ENCODE measurements at regions of chr16 and their contacts with region 1.

Region 1: GRCh38 chr16:67521095-67521804 is 7.4 kb upstream of the RIPOR1 start:
- DNase-seq: peak; percentile 95 to 97
- ATAC-seq: peak; percentile 91 to 97 (median 94)
- H3K4me3 ChIP-seq: peak overlapping the region in 9 of 10 donors; percentile 14 to 55 (median 52)
- H3K27ac ChIP-seq: peak overlapping the region in 9 of 10 donors; percentile 74 to 95 (median 87)
- H3K4me1 ChIP-seq: peaks cover 0 to 22% (median 12%) of the 10 kb centered on the region in 9 donors
- H3K27me3 ChIP-seq: no peaks in the 10 kb centered on the region
- CTCF ChIP-seq: peak; percentile 71 to 90 (median 77)

Region 2: DNA sequence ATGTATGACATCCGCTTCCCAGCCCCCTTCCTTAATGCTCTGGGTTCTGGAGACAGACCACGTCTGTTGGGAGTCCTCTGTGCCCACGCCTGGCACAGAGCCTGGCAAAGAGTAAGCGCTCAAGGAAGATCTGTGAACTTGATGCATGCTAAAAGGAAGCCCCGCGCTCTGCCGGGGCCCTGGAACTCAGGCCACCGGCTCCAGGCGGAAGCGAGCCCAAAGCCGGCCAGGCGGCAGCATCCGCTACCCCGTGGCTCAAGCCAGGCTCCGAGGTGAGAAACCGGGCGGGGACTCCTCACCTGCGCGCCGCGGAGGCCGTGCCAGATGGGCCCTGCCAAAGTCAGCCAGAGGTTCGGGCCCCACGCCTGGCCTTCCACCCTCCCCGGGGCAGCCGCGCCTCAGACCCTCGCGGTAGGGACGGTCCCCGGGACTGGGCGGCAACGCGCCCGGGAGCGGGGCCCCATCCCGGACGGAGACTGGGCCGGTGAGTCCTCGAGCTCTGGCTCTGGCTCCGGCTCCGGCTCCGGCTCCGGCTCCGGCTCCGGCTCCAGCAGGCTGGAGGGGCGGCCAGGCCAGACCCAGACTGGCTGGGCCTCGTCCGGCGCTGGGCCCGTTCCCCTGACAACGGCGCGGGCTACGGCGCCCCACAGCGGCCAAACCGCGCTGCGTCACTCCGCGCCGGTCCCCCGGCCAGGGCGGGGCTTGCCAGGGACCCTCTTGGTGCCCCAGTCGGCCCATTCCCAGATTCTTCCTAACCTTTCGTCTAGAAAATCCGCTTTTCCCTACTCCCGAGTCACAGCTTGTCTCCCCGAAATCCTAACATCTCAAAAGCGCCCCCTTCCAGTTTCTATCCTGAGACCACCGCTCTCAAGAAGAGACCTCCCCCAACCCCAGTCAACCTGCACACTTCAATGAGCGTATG is 105.1 kb before region 1 on chr16 and contains the start of gene ZDHHC1:
- intact Hi-C with region 1: no loop called
- DNase-seq: peak; percentile 68 to 83
- ATAC-seq: peak; percentile 95 to 97 (median 96)
- H3K4me3 ChIP-seq: peak within 1 kb of the TSS; percentile 78 to 96 (median 92)
- H3K27ac ChIP-seq: peak within 1 kb of the TSS; percentile 38 to 93 (median 87)
- H3K4me1 ChIP-seq: peaks cover 0 to 33% (median 13%) of the 10 kb centered on the region in 9 donors
- H3K27me3 ChIP-seq: peaks cover 0 to 9% (median 0%) of the 10 kb centered on the region in 7 donors
- CTCF ChIP-seq: peak; percentile 22 to 76 (median 62)
- total RNA-seq, gene ZDHHC1: 3.2 to 6.3 (median 4.2) TPM

Region 3: DNA sequence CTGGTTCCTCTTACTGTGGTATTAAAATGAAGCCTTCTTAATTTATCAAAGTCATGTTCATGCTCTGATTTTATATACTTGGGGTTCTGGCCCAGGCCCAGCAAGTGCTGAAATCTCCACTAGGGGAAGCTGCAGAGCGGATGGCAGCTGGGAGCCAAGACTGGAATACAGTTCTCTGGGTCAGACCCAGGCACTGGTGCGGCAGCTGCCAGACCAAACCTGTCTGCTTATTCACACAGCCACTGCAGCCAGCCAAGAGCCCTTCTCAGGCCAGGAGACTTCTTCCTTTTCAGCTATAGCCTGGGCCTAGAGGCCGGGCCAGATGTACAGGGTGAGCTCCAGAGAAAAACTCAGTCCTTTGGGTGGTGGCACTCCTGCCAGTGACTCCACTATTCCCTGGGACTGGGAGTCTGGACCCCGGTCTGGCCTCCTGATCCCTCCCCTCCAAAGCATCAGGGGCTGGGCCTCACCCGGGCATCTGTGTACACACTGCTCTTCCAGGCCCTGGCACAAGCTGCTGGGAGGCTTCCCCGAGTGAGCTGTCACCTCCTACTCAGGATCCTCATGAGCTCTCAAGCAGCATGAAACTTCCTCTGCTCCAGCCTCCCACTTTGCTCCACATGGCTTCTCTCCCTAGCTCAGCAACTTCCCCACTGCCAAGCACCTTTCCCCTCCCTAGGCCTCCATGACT is 64.7 kb before region 1 on chr16:
- intact Hi-C with region 1: no loop called
- DNase-seq: peak; percentile 56 to 67
- ATAC-seq: peak; percentile 18 to 73 (median 34)
- H3K4me3 ChIP-seq: no peak overlapping the region
- H3K27ac ChIP-seq: peak overlapping the region in 9 of 10 donors; percentile 39 to 87 (median 69)
- H3K4me1 ChIP-seq: peaks cover 45 to 75% (median 64%) of the 10 kb centered on the region in 9 donors
- H3K27me3 ChIP-seq: no peaks in the 10 kb centered on the region
- CTCF ChIP-seq: peak; percentile 20 to 63 (median 54)

Region 4: DNA sequence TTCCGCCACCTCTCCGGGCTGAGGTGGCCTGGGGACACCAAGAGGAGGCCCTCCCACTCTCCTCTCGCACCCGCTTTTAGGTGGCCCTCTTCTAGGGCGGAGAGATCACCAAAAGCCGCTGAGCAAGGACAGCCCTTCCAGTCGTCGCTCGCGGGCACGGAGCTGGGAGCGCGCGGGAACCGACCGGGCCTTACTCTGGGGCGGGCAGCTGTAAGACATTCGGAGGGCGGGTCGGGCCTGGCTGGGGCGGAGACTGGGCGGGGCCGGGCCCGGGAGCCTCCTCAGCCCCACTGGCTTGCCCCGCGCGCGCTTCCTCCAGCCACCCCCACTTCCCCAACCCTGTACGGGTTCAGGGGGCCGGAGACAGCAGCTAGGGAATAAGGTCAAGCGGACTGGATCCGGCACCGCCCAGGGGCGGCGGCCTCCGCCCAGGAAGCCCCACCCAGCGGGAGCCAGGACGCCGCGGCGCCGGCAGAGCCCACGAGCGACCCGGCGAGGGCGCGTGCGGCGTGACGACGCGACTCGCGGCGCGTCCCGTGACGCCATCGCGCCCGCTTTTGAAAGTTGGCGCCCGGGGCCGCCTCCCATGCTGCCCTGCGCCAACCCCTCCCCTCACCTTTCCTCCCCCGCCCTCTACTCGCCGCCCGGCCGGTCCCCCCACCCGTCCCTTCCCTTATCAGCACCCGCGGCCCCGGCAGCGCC is 40.7 kb after region 1 on chr16:
- intact Hi-C with region 1: loop called in 4 of 10 experiments (anchors 1 to 2 kb)
- DNase-seq: peak; percentile 97
- ATAC-seq: peak; percentile 90 to 97 (median 95)
- H3K4me3 ChIP-seq: peak overlapping the region; percentile 26 to 100 (median 98)
- H3K27ac ChIP-seq: peak overlapping the region; percentile 99 to 100 (median 100)
- H3K4me1 ChIP-seq: peaks cover 6 to 48% (median 36%) of the 10 kb centered on the region in 9 donors
- H3K27me3 ChIP-seq: no peaks in the 10 kb centered on the region
- CTCF ChIP-seq: no peak

Region 5: DNA sequence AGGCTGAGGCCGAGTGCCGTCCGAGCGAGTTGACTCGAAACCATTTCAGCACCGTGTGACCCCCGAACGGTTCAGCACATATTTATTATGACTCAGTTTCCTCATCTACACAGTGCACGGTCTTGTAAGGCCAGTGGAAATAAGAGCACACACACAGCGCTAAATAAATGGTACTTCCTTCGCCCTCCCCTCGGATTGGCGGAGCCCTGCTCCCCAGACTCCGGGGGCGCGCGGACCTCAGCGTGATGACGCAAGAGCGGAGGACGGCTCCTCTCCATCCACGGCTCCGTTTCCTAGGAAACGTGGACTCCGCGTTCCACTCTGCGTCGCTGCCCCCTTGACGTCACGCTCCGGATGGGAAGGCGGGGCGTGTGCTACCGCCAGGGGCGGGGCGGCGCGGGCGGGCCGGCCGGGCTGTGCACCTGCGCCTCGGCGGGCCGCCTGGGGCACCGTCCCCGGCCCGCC is 139.3 kb after region 1 on chr16 and contains the start of gene PARD6A:
- intact Hi-C with region 1: loop called in 2 of 10 experiments (anchors 2 to 5 kb)
- DNase-seq: peak; percentile 95 to 96
- ATAC-seq: peak; percentile 81 to 97 (median 92)
- H3K4me3 ChIP-seq: peak within 1 kb of the TSS; percentile 60 to 95 (median 82)
- H3K27ac ChIP-seq: peak within 1 kb of the TSS; percentile 77 to 97 (median 90)
- H3K4me1 ChIP-seq: peaks cover 14 to 28% (median 21%) of the 10 kb centered on the region in 9 donors
- H3K27me3 ChIP-seq: peaks cover 0 to 6% (median 0%) of the 10 kb centered on the region in 7 donors
- CTCF ChIP-seq: no peak
- total RNA-seq, gene PARD6A: 1.7 to 5.9 (median 2.2) TPM

Region 6: GRCh38 chr16:67841764-67842508 is 320.7 kb after region 1 on chr16 and contains the start of gene THAP11:
- intact Hi-C with region 1: loop called in 1 of 10 experiments (anchors 10 kb)
- DNase-seq: peak; percentile 92 to 95
- ATAC-seq: peak; percentile 76 to 90 (median 80)
- H3K4me3 ChIP-seq: peak within 1 kb of the TSS; percentile 57 to 96 (median 89)
- H3K27ac ChIP-seq: peak within 1 kb of the TSS; percentile 96 to 100 (median 100)
- H3K4me1 ChIP-seq: peaks cover 17 to 46% (median 42%) of the 10 kb centered on the region in 9 donors
- H3K27me3 ChIP-seq: no peaks in the 10 kb centered on the region
- CTCF ChIP-seq: peak; percentile 76 to 91 (median 85)
- total RNA-seq, gene THAP11: 20.6 to 41.3 (median 26.9) TPM

Region 7: GRCh38 chr16:68040507-68041288 is 519.4 kb after region 1 on chr16:
- intact Hi-C with region 1: loop called in 1 of 10 experiments (anchors 5 kb)
- DNase-seq: peak; percentile 83 to 84
- ATAC-seq: peak; percentile 89 to 96 (median 94)
- H3K4me3 ChIP-seq: no peak overlapping the region
- H3K27ac ChIP-seq: peak overlapping the region in 1 of 10 donors; percentile 69
- H3K4me1 ChIP-seq: peaks cover 0 to 45% (median 0%) of the 10 kb centered on the region in 9 donors
- H3K27me3 ChIP-seq: no peaks in the 10 kb centered on the region
- CTCF ChIP-seq: peak; percentile 73 to 88 (median 83)